MCF 10A (cell line): ENCODE measurements at regions of chr19 and their contacts with region 1.

Region 1: GRCh38 chr19:56252699-56253422 is 19.7 kb upstream of the EDDM13 start:
- DNase-seq: peak; percentile 54
- H3K4me3 Mint-ChIP-seq: no peak overlapping the region
- H3K27ac Mint-ChIP-seq: no peak overlapping the region
- H3K4me1 Mint-ChIP-seq: no peaks in the 10 kb centered on the region
- H3K27me3 Mint-ChIP-seq: no peaks in the 10 kb centered on the region
- CTCF ChIP-seq: peak; percentile 72

Region 2: GRCh38 chr19:56066152-56067023 is 186.5 kb before region 1 on chr19:
- CTCF ChIA-PET with region 1: interaction called, 39 read pairs
- POLR2A ChIA-PET with region 1: no interaction called
- intact Hi-C with region 1: no loop called
- DNase-seq: peak; percentile 59
- H3K4me3 Mint-ChIP-seq: no peak overlapping the region
- H3K27ac Mint-ChIP-seq: no peak overlapping the region
- H3K4me1 Mint-ChIP-seq: peaks cover 8% of the 10 kb centered on the region
- H3K27me3 Mint-ChIP-seq: no peaks in the 10 kb centered on the region
- CTCF ChIP-seq: peak; percentile 94

Region 3: GRCh38 chr19:56126973-56127780 is 125.7 kb before region 1 on chr19:
- CTCF ChIA-PET with region 1: no interaction called
- POLR2A ChIA-PET with region 1: no interaction called
- intact Hi-C with region 1: no loop called
- DNase-seq: no peak
- H3K4me3 Mint-ChIP-seq: no peak overlapping the region
- H3K27ac Mint-ChIP-seq: no peak overlapping the region
- H3K4me1 Mint-ChIP-seq: no peaks in the 10 kb centered on the region
- H3K27me3 Mint-ChIP-seq: no peaks in the 10 kb centered on the region
- CTCF ChIP-seq: no peak

Region 4: DNA sequence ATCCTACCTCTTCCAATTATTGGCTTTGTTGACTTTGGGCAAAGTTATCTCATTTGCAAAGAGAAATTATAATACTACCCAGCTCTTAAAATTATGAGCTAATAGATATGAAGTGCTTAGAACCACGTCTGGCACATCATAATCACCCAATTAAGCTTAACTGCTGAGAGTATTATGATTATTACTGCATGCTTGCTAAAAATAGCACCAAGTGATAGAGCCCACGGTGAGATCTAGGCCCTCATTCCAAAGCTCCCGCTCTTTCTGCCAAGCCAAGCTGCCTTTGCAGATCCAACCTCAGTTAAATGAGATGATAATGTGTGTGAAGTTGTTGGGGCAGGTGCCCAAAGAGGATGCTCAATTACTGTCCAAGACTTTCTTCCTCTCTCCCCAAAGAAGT is 13.2 kb after region 1 on chr19:
- CTCF ChIA-PET with region 1: interaction called, 46 read pairs
- POLR2A ChIA-PET with region 1: no interaction called
- intact Hi-C with region 1: no loop called
- DNase-seq: no peak
- H3K4me3 Mint-ChIP-seq: no peak overlapping the region
- H3K27ac Mint-ChIP-seq: no peak overlapping the region
- H3K4me1 Mint-ChIP-seq: no peaks in the 10 kb centered on the region
- H3K27me3 Mint-ChIP-seq: no peaks in the 10 kb centered on the region
- CTCF ChIP-seq: no peak

Region 5: DNA sequence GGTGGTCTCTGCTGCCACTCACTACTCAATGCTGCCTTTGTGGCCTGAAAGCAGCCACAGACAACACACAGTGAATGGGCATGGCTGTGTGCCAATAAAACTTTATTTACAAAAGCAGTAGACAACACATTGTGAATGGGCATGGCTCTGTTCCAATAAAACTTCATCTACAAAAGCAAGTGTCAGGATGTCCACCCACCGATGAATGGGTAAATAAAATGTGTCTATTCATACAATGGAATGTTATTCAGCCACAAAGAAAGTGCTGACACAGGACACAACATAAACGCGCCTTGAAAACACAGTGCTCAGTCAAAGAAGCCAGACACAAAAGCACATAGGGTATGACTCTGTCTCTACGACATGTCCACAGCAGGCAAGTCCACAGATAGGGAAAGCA is 41.7 kb after region 1 on chr19:
- CTCF ChIA-PET with region 1: interaction called, 11 read pairs
- POLR2A ChIA-PET with region 1: interaction called, 3 read pairs
- intact Hi-C with region 1: no loop called
- DNase-seq: peak; percentile 43
- H3K4me3 Mint-ChIP-seq: peak overlapping the region; percentile 21
- H3K27ac Mint-ChIP-seq: peak overlapping the region; percentile 80
- H3K4me1 Mint-ChIP-seq: peaks cover 6% of the 10 kb centered on the region
- H3K27me3 Mint-ChIP-seq: no peaks in the 10 kb centered on the region
- CTCF ChIP-seq: no peak

Region 6: DNA sequence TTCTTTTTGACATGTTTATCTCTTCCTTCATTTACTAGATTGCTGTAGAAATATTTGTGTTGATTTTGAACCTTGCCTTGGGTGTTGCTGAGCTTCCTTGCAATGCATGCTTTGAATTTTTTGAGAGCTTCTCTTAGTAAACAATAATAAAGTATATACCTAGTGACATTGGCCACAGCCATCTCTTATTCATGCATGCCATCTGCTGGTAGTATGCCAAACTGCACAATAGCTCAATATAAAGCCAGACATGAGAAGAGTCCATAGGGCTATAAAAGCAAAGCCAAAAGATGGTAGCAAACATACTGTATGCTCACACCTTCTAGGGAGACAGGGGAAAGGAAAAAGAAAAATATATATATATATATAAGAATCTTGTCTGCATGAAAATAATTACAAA is 80.6 kb after region 1 on chr19:
- CTCF ChIA-PET with region 1: interaction called, 168 read pairs
- POLR2A ChIA-PET with region 1: interaction called, 8 read pairs
- intact Hi-C with region 1: loop called (anchors 1 kb)
- DNase-seq: peak; percentile 62
- H3K4me3 Mint-ChIP-seq: no peak overlapping the region
- H3K27ac Mint-ChIP-seq: no peak overlapping the region
- H3K4me1 Mint-ChIP-seq: no peaks in the 10 kb centered on the region
- H3K27me3 Mint-ChIP-seq: peaks cover 11% of the 10 kb centered on the region
- CTCF ChIP-seq: peak; percentile 69

Region 7: DNA sequence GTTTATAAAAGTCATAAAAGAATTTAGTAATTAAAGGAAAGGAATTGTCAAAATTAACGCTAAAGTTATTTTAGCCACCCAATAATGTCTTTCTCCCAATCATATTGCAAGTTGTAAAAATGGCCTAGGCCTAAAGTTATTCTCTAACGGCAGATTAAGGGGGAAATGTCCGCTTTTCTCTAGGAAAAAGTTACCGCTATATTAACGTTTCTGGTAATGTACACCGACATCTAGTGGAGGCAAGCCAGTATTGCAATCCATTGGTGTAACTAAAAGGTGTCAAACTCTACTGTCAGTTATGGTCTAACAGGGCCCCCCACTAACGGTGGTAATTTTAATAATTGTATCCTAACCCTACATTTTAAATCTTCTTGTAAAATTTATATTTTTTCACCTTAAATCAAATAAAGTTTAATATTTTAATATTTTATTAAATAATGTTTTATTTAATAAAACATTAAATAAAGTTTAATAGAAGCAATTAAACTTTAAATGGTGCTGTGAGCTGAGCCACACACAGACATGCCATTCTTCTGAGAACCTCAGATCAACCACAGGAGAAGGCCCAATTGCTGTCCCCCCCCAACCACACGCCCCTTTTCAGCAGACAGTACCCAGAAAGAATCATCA is 97.7 kb after region 1 on chr19:
- CTCF ChIA-PET with region 1: interaction called, 22 read pairs
- POLR2A ChIA-PET with region 1: no interaction called
- intact Hi-C with region 1: loop called (anchors 5 kb)
- DNase-seq: peak; percentile 49
- H3K4me3 Mint-ChIP-seq: no peak overlapping the region
- H3K27ac Mint-ChIP-seq: no peak overlapping the region
- H3K4me1 Mint-ChIP-seq: no peaks in the 10 kb centered on the region
- H3K27me3 Mint-ChIP-seq: no peaks in the 10 kb centered on the region
- CTCF ChIP-seq: peak; percentile 79